BJ (cell line): ENCODE measurements at regions of chr16 and their contacts with region 1.

Region 1: DNA sequence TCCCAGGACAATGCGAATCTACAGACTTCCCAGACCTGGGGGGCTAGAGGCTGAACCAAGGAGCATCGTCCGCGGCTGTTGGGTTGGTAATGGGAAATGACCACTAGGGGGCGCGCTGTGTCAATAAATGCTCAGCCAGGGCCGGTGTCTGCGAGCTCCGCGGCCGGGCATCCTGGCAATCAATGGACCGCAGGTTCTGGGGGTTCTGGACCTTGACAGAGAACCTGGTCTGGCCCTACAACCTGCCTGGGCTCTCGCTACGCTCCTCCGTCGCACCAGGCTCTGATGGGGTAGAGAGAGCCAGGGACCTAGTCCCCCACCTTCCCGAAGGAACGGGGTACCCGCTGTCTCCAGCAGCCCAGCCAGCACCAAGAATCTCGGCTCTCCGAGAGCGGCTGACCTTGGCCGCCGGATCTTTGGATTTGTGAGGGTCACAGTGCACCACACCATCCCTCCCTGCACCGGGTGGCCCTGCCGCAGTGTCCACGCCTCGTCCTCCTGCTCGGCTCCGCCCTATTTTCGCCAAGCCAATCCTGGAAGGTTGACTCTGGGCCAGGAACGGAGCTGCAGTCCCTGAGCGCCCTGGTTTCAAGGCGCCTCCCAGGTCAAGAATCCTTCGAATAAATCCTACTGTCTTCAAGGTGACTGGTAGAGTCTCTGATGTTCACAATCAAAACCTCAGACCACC is 20.4 kb upstream of the BEAN1 start:
- DNase-seq: no peak
- H3K4me3 ChIP-seq: peak overlapping the region; percentile 53
- H3K27me3 ChIP-seq: peaks cover 9% of the 10 kb centered on the region
- CTCF ChIP-seq: peak; percentile 80

Region 2: GRCh38 chr16:66135421-66135831 is 271.3 kb before region 1 on chr16:
- CTCF ChIA-PET with region 1: no interaction called
- POLR2A ChIA-PET with region 1: no interaction called
- DNase-seq: no peak
- H3K4me3 ChIP-seq: no peak overlapping the region
- H3K27me3 ChIP-seq: no peaks in the 10 kb centered on the region
- CTCF ChIP-seq: no peak

Region 3: GRCh38 chr16:66315210-66315825 is 91.4 kb before region 1 on chr16:
- CTCF ChIA-PET with region 1: no interaction called
- POLR2A ChIA-PET with region 1: no interaction called
- DNase-seq: peak; percentile 5
- H3K4me3 ChIP-seq: no peak overlapping the region
- H3K27me3 ChIP-seq: peaks cover 5% of the 10 kb centered on the region
- CTCF ChIP-seq: peak; percentile 99

Region 4: GRCh38 chr16:66422366-66422765 is 15.7 kb after region 1 on chr16:
- CTCF ChIA-PET with region 1: interaction called, 16 read pairs
- POLR2A ChIA-PET with region 1: no interaction called
- DNase-seq: no peak
- H3K4me3 ChIP-seq: no peak overlapping the region
- H3K27me3 ChIP-seq: peaks cover 26% of the 10 kb centered on the region
- CTCF ChIP-seq: no peak

Region 5: GRCh38 chr16:66483689-66484481 is 77.2 kb after region 1 on chr16:
- CTCF ChIA-PET with region 1: interaction called, 34 read pairs
- POLR2A ChIA-PET with region 1: no interaction called
- DNase-seq: no peak
- H3K4me3 ChIP-seq: no peak overlapping the region
- H3K27me3 ChIP-seq: no peaks in the 10 kb centered on the region; the same call in none of the 2 replicates
- CTCF ChIP-seq: peak; percentile 99

Region 6: GRCh38 chr16:66608241-66609138 is 201.8 kb after region 1 on chr16:
- CTCF ChIA-PET with region 1: interaction called, 21 read pairs
- POLR2A ChIA-PET with region 1: no interaction called
- DNase-seq: peak; percentile 32
- H3K4me3 ChIP-seq: no peak overlapping the region
- H3K27me3 ChIP-seq: no peaks in the 10 kb centered on the region
- CTCF ChIP-seq: peak; percentile 94

Region 7: DNA sequence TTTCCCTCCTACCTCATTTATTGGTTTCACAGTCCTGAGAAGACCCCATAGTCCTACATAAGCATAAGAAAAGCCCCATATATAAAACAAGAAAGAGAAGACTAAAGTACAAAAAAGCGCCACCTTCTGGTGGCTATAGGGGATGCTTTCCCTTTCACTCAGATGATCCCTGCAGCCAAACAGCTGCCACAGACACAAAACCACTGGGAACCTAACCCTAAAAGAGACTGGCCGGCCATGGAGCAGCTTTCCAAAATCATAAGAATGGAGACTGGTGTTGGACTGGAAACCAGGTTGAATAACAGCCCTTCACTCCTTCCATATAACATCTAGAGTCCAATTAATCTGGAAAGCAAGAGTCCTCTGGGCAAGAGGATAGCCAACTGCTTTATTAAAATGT is 333.3 kb after region 1 on chr16:
- CTCF ChIA-PET with region 1: interaction called, 15 read pairs
- POLR2A ChIA-PET with region 1: no interaction called
- DNase-seq: no peak
- H3K4me3 ChIP-seq: no peak overlapping the region
- H3K27me3 ChIP-seq: no peaks in the 10 kb centered on the region
- CTCF ChIP-seq: peak; percentile 62